Vagina (tissue), 2 donors: ENCODE measurements at regions of chr15 and their contacts with region 1.

Region 1: GRCh38 chr15:29713784-29714183 is 108.5 kb downstream of the TJP1 start:
- DNase-seq: no peak
- H3K4me3 ChIP-seq: no peak overlapping the region
- H3K27ac ChIP-seq: no peak overlapping the region
- H3K4me1 ChIP-seq: no peaks in the 10 kb centered on the region
- H3K27me3 ChIP-seq: no peaks in the 10 kb centered on the region
- CTCF ChIP-seq: no peak
- POLR2A ChIP-seq: no peak

Region 2: DNA sequence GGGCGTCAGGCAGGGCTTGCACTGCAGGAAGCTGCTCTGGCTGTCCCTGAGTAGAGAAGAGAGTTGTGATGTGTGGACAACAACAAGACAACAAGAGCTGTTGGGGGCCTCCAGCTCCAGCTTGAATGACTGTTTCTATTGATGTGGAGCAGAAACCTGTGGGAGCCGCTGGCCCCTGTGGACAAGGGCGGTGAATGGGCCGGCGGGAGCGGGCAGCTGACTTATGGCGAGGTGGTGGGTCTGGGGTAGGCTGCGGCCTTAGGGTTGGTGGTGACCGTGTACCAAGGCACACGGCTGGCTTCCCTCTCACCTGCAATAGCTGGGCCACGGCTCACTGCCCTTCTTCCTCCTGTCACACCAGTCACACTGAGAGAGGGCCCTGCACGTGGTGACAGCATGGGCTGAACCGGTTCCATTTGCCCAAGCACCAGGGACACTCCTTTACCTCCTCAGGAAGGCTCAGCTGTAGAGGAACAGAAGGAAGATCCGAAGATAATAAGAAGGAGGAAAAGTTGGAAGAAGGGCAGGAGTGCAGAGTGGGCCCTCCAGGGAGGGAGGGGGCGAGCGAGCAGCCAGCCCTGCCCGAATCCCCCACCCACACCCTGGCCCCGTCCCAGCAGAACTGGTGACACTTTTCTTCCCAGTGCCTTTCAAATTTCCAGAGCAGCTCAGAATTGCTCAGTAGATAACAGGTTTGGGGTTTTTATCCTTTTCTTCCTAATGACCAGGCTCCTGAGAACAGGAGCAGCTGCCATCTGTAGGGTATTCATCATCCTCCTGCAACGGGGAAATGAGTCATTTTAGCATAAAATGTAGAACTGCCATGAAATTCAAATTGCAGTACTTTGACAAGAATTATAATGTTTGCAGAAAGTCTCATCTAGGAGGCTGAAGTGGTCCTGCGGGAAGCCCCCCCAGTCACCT is 28.4 kb before region 1 on chr15:
- intact Hi-C with region 1: loop called (anchors 2 kb)
- DNase-seq: peak in 1 of 2 donors; percentile 58
- H3K4me3 ChIP-seq: no peak overlapping the region
- H3K27ac ChIP-seq: no peak overlapping the region
- H3K4me1 ChIP-seq: no peaks in the 10 kb centered on the region
- H3K27me3 ChIP-seq: no peaks in the 10 kb centered on the region
- CTCF ChIP-seq: no peak
- POLR2A ChIP-seq: no peak